PC-9 (cell line): ENCODE measurements at regions of chr5 and their contacts with region 1.

Region 1: GRCh38 chr5:50751064-50751657 is 84.7 kb downstream of the PARP8 start:
- DNase-seq: peak in 1 of 2 experiments; percentile 3
- H3K4me3 ChIP-seq: no peak overlapping the region
- H3K27ac ChIP-seq: no peak overlapping the region
- H3K4me1 ChIP-seq: no peaks in the 10 kb centered on the region
- H3K27me3 ChIP-seq: no peaks in the 10 kb centered on the region
- CTCF ChIP-seq: peak; percentile 79

Region 2: DNA sequence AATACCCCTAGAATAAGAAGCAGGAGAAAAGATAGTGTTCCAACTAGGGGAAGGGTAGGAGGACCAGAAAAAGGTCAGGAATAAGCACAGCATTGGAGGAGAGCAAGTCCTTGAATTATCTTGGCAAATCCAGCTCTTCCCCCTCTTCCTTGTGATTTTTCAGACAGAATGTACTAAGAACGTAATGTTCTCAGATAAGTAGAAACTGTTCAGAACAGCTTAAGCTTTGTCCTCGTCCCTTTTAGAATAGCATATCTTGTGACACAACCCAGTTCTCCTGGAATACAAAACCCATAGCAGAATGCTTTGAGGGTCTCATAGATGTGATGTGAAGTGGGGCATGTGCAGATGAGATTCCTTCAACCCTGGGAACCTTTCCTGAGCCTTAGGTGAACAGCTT is 407.4 kb before region 1 on chr5:
- CTCF ChIA-PET with region 1: no interaction called
- POLR2A ChIA-PET with region 1: no interaction called
- intact Hi-C with region 1: loop called (anchors 2 kb)
- DNase-seq: no peak
- H3K4me3 ChIP-seq: no peak overlapping the region
- H3K27ac ChIP-seq: no peak overlapping the region
- H3K4me1 ChIP-seq: no peaks in the 10 kb centered on the region
- H3K27me3 ChIP-seq: no peaks in the 10 kb centered on the region
- CTCF ChIP-seq: no peak

Region 3: DNA sequence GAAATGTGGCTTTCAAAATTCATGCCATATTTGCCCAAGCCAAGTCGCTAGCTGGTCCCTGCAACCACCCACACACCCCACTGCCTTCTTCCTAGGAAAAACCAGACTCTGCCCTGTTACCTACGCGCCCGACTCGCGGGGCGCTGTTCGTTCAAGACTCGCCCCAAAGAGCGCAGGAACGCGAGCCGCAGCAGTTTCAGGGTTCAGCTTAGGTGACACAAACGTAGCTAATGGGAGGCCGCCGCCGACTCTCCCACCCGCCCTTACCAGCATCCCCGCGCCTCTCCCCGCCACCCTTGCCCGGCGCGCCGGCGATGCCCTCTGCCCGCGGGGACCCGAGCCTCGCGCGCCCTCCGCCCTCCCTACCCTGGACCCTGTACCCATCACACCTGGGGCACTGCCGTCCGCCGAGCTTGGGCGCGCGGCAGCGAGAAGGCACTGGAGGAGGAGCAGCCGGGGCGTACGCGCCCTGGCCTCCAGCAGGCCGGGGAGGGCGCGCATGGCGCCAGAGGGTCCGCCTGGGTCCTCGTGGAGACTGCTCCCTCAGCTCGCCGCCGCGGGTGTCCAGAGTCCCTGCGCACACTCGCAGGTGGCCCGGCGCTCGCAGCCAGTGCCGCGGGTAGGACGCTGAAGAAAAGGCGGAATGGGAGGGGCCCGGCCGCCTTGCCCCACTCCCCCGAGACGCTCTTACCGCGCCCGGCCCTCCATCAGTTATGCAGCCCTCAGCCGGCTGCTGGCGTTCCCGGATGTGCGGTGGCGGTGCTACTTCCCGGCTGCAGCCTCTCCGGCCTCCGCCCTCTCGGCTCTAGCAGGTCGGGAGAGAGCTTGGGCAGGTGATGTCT is 310.3 kb before region 1 on chr5 and contains the start of gene EMB:
- CTCF ChIA-PET with region 1: no interaction called
- POLR2A ChIA-PET with region 1: no interaction called
- intact Hi-C with region 1: loop called (anchors 5 kb)
- DNase-seq: peak; percentile 42 to 66
- H3K4me3 ChIP-seq: peak within 1 kb of the TSS; percentile 66
- H3K27ac ChIP-seq: no peak within 1 kb of the TSS
- H3K4me1 ChIP-seq: 0 out of 2 replicates have a peak, but pooled peaks cover 7% of the 10 kb centered on the region
- H3K27me3 ChIP-seq: no peaks in the 10 kb centered on the region
- CTCF ChIP-seq: no peak; the same call in 1 of the 2 replicates
- total RNA-seq, gene EMB: 11.6 and 11.8 TPM in 2 replicates

Region 4: GRCh38 chr5:50595199-50595598 is 156.0 kb before region 1 on chr5:
- CTCF ChIA-PET with region 1: no interaction called
- POLR2A ChIA-PET with region 1: no interaction called
- intact Hi-C with region 1: no loop called
- DNase-seq: peak; percentile 12 to 77
- H3K4me3 ChIP-seq: peak overlapping the region; percentile 21; the same call in 1 of the 2 replicates
- H3K27ac ChIP-seq: peak overlapping the region; percentile 77
- H3K4me1 ChIP-seq: peaks cover 26% of the 10 kb centered on the region
- H3K27me3 ChIP-seq: no peaks in the 10 kb centered on the region
- CTCF ChIP-seq: no peak